Activated T-helper 1 cell treated with anti-CD3 and anti-CD28 coated beads, Interleukin-12 subunit alpha, Interleukin-12 subunit beta, Interleukin-2, Interleukin-4 antibody, amounts not matched to agents 30 ng/mL and 10 ng/mL and 1 ng/mL, durations not matched to agents 14 hours and 24 hours and 36 hours (primary cell): ENCODE measurements at regions of chr18 and their contacts with region 1.

Region 1: GRCh38 chr18:32086861-32087260 is 4.8 kb upstream of the RNF138 start:
- DNase-seq: no peak
- H3K4me3 Mint-ChIP-seq: no peak overlapping the region
- H3K27ac Mint-ChIP-seq: no peak overlapping the region
- H3K4me1 Mint-ChIP-seq: peaks cover 38% of the 10 kb centered on the region
- H3K27me3 Mint-ChIP-seq: peaks cover 4% of the 10 kb centered on the region

Region 2: DNA sequence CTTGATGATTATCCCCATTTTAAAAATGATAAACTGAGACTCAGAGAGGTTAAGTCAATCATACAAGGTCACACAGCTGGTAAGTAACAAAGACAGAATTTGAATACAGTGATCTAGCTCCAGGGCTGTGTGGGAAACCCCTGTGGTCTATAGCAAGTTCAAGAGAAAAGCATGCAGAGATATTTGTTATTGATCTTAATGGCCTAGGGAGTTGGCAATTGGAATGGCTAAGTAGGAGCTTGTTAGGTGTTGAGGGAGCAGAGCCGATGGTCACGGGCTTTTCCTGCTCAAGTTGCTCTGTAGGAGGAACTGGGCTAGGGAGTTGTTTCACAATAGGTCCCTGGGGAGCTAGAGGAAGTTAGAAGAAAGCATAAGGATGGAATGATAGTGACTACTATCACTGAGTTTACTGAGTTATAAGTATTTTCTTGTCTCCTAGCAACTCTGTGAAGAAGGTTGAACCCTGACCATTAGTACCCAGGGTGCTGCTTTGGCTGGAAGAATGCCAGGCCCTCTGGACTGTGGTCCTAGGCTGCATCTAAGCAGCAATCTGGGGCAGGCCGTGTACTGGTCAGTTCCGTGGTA is 38.3 kb before region 1 on chr18:
- intact Hi-C with region 1: loop called (anchors 2 kb)
- DNase-seq: peak; percentile 6
- H3K4me3 Mint-ChIP-seq: peak overlapping the region; percentile 30
- H3K27ac Mint-ChIP-seq: peak overlapping the region; percentile 84
- H3K4me1 Mint-ChIP-seq: peaks cover 30% of the 10 kb centered on the region
- H3K27me3 Mint-ChIP-seq: no peaks in the 10 kb centered on the region